Right ventricle myocardium inferior (tissue), 1 donor: ENCODE measurements at regions of chr13 and their contacts with region 1.

Region 1: GRCh38 chr13:97344265-97345175 is 89.4 kb upstream of the RAP2A start:
- DNase-seq: no peak
- ATAC-seq: peak; percentile 85

Region 2: DNA sequence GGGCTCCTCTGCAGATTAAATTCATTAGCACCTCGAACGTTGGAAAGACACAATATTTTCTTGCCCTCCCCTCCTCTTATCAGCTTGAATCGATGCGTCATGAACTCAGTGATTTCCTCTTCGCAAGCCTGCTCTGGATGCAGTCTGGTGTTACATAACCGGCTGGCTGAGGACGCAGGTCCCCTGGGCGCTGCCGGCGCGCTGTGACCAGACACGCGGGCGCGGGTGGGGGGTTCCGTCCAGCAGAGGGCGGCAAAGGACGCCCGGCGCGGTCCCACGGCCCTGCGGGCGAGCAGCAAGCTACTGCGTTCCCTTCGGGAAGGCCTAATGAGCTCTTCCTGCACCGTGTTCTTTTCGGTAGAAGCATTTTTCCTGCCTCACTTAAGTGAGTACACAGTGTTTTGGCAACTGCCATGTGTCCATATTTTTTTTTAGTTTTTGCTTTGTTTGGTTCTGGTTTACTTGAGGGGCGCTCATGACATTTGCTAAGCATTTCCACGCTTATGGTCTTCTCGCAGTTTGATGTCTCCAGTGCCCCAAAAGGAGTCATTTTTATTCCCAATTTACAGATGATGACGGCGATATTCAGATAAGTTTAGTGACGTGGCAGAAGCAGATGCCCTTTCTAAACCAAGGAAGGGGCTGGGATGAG is 234.6 kb before region 1 on chr13:
- intact Hi-C with region 1: loop called (anchors 2 kb)
- DNase-seq: peak; percentile 95
- ATAC-seq: peak; percentile 98

Region 3: GRCh38 chr13:97221989-97222700 is 122.4 kb before region 1 on chr13 and contains the start of gene MBNL2:
- intact Hi-C with region 1: loop called (anchors 2 kb)
- DNase-seq: peak; percentile 92
- ATAC-seq: peak; percentile 97
- total RNA-seq, gene MBNL2: 69.1 TPM

Region 4: DNA sequence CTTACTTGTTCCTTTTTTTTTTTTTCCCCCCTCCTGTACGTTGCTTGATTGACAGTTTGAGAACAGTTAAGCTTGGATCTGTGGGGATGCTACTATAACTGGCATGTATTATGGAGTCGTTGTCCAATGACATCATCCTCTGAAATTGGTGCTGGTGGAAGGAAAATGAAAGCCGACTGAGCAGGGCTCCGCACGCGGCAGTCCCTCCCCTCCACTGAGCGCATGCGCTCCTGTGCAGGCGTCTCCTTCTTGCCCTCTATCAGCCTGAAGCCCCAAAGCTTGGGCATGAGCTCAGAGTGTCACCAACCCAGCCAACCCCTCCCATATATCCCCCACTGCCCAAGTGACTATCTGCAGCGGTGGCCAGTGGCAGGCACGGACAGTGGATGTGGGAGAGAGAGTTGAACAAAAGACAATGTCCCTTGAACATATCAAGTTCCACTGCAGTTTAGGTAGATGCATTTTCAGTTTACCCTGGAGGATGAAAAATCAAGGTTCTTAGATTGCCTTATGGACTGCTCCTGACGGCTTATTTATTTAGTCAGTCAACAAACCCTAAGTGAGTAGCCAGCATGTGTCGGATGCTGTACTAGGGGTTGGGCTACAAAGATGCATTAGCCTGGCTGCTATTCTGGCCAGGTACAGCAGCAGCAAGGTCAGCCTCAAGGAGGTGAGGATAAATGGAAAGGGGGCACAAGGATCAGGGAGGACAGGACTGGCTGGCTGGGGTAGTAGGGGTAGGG is 101.6 kb before region 1 on chr13:
- intact Hi-C with region 1: loop called (anchors 5 kb)
- DNase-seq: no peak
- ATAC-seq: peak; percentile 25